ENCODE measurements at regions of chr1 and their contacts with region 1.

Region 1: GRCh38 chr1:204565617-204566582 is 49.7 kb downstream of the MDM4 start:
- DNase-seq: peak in 1 of 2 donors; percentile 41
- ATAC-seq: peak; percentile 57 to 86 (median 80)
- H3K4me3 ChIP-seq: no peak overlapping the region
- H3K27ac ChIP-seq: no peak overlapping the region
- H3K4me1 ChIP-seq: peaks cover 0 to 3% (median 0%) of the 10 kb centered on the region in 9 donors
- H3K27me3 ChIP-seq: no peaks in the 10 kb centered on the region
- CTCF ChIP-seq: peak in 8 of 9 donors; percentile 43 to 77 (median 68)

Region 2: DNA sequence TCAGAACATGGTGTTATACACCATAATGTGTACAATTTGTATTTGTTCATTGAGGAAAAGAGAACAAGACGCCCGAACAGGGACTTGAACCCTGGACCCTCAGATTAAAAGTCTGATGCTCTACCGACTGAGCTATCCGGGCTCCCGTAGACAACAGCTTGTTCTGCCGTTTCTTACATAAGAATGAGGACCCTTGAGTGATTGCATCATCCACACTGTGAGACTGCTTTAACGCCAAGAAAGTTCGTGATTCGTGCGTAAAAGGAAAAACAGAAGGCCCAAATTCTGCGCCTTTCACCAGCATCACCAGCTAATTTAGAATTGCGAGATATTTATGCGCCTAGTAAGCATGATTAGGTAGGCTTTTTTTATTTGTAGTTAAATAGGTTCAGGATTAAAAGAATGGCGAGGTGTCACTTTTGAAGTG is 58.9 kb before region 1 on chr1:
- intact Hi-C with region 1: no loop called
- DNase-seq: peak; percentile 36 to 88
- ATAC-seq: peak; percentile 74 to 92 (median 90)
- H3K4me3 ChIP-seq: peak overlapping the region; percentile 30 to 68 (median 59)
- H3K27ac ChIP-seq: peak overlapping the region; percentile 68 to 90 (median 86)
- H3K4me1 ChIP-seq: peaks cover 0 to 34% (median 25%) of the 10 kb centered on the region in 9 donors
- H3K27me3 ChIP-seq: no peaks in the 10 kb centered on the region
- CTCF ChIP-seq: no peak

Region 3: GRCh38 chr1:204763706-204764427 is 198.0 kb after region 1 on chr1:
- intact Hi-C with region 1: loop called in 9 of 10 experiments (anchors 1 to 10 kb)
- DNase-seq: peak; percentile 38 to 75
- ATAC-seq: peak; percentile 78 to 98 (median 94)
- H3K4me3 ChIP-seq: no peak overlapping the region
- H3K27ac ChIP-seq: no peak overlapping the region
- H3K4me1 ChIP-seq: peaks cover 4 to 12% (median 10%) of the 10 kb centered on the region in 9 donors
- H3K27me3 ChIP-seq: peaks cover 0 to 39% (median 30%) of the 10 kb centered on the region in 7 donors
- CTCF ChIP-seq: peak; percentile 60 to 90 (median 84)

Region 4: GRCh38 chr1:204769997-204770396 is 204.1 kb after region 1 on chr1:
- intact Hi-C with region 1: loop called in 3 of 10 experiments (anchors 2 to 10 kb)
- DNase-seq: no peak
- ATAC-seq: no peak
- H3K4me3 ChIP-seq: no peak overlapping the region
- H3K27ac ChIP-seq: no peak overlapping the region
- H3K4me1 ChIP-seq: no peaks in the 10 kb centered on the region
- H3K27me3 ChIP-seq: peaks cover 0 to 87% (median 61%) of the 10 kb centered on the region in 7 donors
- CTCF ChIP-seq: no peak

Measured in heart right ventricle (tissue), 16 donors.